Activated CD4-positive, alpha-beta memory T cell treated with anti-CD3 and anti-CD28 coated beads for 36 hours (primary cell): ENCODE measurements at regions of chr5 and their contacts with region 1.

Region 1: GRCh38 chr5:59020611-59021285 is 437.9 kb downstream of the RAB3C start:
- DNase-seq: peak; percentile 67
- H3K4me3 Mint-ChIP-seq: peak overlapping the region; percentile 17
- H3K27ac Mint-ChIP-seq: peak overlapping the region; percentile 87
- H3K4me1 Mint-ChIP-seq: peaks cover 50% of the 10 kb centered on the region
- H3K27me3 Mint-ChIP-seq: no peaks in the 10 kb centered on the region

Region 2: GRCh38 chr5:58925627-58926540 is 94.9 kb before region 1 on chr5:
- CTCF ChIA-PET with region 1: no interaction called
- POLR2A ChIA-PET with region 1: no interaction called
- intact Hi-C with region 1: loop called (anchors 1 kb)
- DNase-seq: peak; percentile 48
- H3K4me3 Mint-ChIP-seq: no peak overlapping the region
- H3K27ac Mint-ChIP-seq: peak overlapping the region; percentile 85
- H3K4me1 Mint-ChIP-seq: peaks cover 41% of the 10 kb centered on the region
- H3K27me3 Mint-ChIP-seq: peaks cover 2% of the 10 kb centered on the region

Region 3: DNA sequence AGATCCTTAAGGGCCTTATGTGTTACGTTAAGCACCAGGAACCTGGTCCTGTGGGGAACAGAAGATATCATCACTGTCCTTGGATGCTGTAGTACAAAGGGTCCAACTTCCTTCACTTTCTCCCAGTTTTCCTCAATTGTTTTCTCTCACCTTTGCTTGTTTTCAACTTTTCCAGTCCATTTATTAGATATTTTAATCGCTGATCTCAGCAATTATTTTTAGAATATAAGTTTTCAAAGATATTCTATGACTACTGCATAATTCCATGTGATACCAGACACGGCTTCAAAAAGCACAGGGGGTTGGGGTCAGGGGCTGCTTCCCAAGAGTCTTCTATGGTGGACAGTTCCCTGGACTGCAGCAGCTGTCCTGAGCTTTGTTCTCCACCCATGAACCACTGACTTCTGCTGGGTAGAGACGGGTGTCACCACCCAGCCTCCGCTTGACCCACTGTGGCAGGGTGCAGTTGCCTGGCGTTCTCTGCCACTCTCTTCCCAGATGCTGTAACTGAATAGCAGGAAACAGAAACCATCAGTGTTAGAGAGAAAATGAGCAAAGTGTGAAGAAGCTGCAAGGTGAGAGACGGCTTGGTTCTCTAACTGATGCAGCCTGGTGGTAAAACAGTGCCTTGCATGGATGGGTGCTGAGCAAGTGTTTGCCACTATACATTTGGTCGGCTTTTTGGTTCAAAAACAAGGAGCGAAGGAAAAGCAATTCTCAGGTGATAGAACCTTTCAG is 54.9 kb before region 1 on chr5:
- CTCF ChIA-PET with region 1: no interaction called
- POLR2A ChIA-PET with region 1: no interaction called
- intact Hi-C with region 1: loop called (anchors 2 kb)
- DNase-seq: no peak
- H3K4me3 Mint-ChIP-seq: no peak overlapping the region
- H3K27ac Mint-ChIP-seq: no peak overlapping the region
- H3K4me1 Mint-ChIP-seq: peaks cover 15% of the 10 kb centered on the region
- H3K27me3 Mint-ChIP-seq: no peaks in the 10 kb centered on the region

Region 4: GRCh38 chr5:59007460-59008063 is 13.2 kb before region 1 on chr5:
- CTCF ChIA-PET with region 1: no interaction called
- POLR2A ChIA-PET with region 1: no interaction called
- intact Hi-C with region 1: loop called (anchors 2 kb)
- DNase-seq: no peak
- H3K4me3 Mint-ChIP-seq: no peak overlapping the region
- H3K27ac Mint-ChIP-seq: no peak overlapping the region
- H3K4me1 Mint-ChIP-seq: peaks cover 57% of the 10 kb centered on the region
- H3K27me3 Mint-ChIP-seq: no peaks in the 10 kb centered on the region

Region 5: DNA sequence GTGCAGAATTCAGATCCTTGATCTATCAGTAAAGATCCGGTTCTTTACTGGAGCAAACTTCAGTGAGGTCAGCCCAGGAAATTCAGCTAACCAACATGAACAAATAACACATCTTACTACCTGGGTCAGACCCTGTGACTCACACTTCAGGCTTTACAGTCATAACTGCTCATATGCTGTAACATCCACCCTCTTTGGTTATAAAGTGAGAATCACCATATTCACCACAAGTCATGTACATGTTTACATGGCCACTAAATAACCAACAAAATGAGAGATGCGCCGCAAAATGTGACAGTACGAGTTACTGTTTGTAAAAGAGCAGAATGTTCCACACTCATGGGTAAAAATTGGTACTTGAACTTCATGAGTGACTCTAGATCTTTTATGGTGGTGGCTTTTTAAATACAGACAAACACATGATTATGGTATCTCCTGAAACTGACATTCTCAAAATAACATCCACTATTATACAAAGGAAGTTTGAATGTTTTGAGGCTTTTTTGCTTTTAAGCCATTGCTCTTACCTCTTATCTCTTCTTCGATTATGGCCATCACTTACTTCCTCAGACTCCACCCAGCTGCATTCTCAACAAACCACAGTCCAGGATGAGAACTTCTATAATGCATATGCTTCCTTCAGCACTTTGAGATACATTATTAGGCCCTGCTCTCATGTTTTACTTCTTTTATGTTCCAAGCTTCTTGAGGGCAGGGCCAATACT is 78.7 kb after region 1 on chr5:
- CTCF ChIA-PET with region 1: interaction called, 3 read pairs
- POLR2A ChIA-PET with region 1: no interaction called
- intact Hi-C with region 1: loop called (anchors 1 kb)
- DNase-seq: peak; percentile 63
- H3K4me3 Mint-ChIP-seq: peak overlapping the region; percentile 8
- H3K27ac Mint-ChIP-seq: peak overlapping the region; percentile 73
- H3K4me1 Mint-ChIP-seq: peaks cover 37% of the 10 kb centered on the region
- H3K27me3 Mint-ChIP-seq: no peaks in the 10 kb centered on the region

Region 6: DNA sequence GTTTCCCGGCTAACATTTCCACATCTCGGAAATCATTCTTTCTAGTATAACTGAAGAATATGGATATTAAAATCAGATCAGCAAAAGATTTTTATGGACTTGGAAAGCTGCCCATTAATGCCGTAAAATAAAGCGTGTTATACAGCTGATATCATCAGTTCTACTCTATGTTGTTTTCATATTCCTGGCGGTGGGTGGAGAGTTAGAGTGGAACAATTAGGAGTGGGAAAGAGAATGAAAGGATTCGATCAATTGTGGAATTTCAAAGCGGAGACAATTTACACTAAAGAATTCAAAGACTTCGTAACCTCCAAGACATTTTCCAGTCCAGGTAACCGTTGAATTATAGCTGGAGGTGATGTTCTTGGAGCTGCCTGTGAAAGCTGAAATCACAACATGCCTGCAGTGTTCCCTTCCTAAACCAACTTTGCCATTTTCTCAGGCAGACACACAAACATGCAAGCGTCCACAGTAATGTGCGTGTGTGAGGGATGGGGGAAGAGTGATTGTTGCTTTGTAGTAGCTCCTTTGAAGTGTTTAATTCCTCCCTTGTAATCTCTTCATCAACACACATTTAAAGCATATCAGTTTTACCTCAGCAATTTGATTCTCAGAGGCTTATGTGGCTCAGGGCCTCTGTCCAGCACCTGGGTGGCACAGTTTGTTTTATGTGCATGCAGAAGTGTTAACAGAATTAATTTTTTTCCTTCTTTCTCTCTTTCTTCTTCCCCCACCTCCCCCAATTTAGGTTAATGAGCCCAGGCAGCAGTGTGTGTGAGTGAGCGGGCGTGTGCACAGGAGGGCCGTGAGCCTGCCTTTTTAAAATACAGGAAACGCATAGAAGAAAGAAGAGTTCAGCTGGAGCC is 106.2 kb after region 1 on chr5:
- CTCF ChIA-PET with region 1: interaction called, 4 read pairs
- POLR2A ChIA-PET with region 1: no interaction called
- intact Hi-C with region 1: loop called (anchors 1 kb)
- DNase-seq: no peak
- H3K4me3 Mint-ChIP-seq: no peak overlapping the region
- H3K27ac Mint-ChIP-seq: no peak overlapping the region
- H3K4me1 Mint-ChIP-seq: peaks cover 15% of the 10 kb centered on the region
- H3K27me3 Mint-ChIP-seq: no peaks in the 10 kb centered on the region

Region 7: GRCh38 chr5:59238126-59238902 is 217.6 kb after region 1 on chr5:
- CTCF ChIA-PET with region 1: no interaction called
- POLR2A ChIA-PET with region 1: no interaction called
- intact Hi-C with region 1: loop called (anchors 2 kb)
- DNase-seq: peak; percentile 9
- H3K4me3 Mint-ChIP-seq: peak overlapping the region; percentile 7
- H3K27ac Mint-ChIP-seq: peak overlapping the region; percentile 18
- H3K4me1 Mint-ChIP-seq: peaks cover 19% of the 10 kb centered on the region
- H3K27me3 Mint-ChIP-seq: peaks cover 51% of the 10 kb centered on the region

Region 8: DNA sequence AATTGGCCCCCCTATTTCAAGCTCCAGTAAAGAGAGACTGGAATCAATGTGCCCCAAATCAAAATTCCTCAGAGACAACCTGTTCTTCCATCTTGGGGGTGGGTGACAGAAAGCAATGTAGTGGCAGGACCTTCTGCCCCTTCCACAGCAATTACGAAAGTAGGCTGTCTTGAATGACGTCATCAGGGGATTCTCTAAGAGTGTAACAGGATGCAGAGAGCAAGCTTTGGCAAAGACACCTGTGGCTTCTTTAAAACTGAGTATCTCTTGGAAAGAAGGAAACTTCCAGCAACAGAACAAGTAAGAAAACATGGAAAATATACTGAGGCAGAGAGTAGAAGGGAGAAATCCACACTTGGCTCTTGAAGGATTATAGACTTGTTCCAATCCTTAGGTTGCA is 1120.4 kb after region 1 on chr5:
- CTCF ChIA-PET with region 1: no interaction called
- POLR2A ChIA-PET with region 1: no interaction called
- intact Hi-C with region 1: no loop called
- DNase-seq: no peak
- H3K4me3 Mint-ChIP-seq: no peak overlapping the region
- H3K27ac Mint-ChIP-seq: no peak overlapping the region
- H3K4me1 Mint-ChIP-seq: no peaks in the 10 kb centered on the region
- H3K27me3 Mint-ChIP-seq: no peaks in the 10 kb centered on the region